GM12878 (cell line): ENCODE measurements at regions of chr3 and their contacts with region 1.

Region 1: DNA sequence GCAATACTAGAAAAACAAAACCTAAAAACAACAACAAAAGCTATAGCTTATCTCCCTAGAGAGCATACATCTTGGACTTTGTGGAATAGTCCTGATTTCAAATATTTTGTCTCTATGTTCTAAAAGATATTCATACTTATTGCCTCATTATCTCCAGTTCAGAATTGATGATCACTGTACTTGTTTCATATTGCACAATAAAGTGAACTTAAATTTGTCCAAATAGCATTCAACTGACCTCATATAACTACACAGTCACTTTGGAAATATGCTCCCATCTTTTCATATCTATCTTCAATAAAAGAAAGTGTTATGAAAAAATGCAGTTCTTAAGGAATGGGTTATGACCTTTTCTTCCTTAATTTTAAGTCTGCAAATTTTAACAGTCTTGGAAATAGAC is 228.6 kb upstream of the CMC1 start:
- DNase-seq: no peak
- ATAC-seq: no peak
- H3K4me3 ChIP-seq: no peak overlapping the region
- H3K27ac ChIP-seq: no peak overlapping the region
- H3K4me1 ChIP-seq: no peaks in the 10 kb centered on the region
- H3K27me3 ChIP-seq: no peaks in the 10 kb centered on the region
- CTCF ChIP-seq: no peak
- EP300 ChIP-seq: no peak
- POLR2A ChIP-seq: no peak
- RAD21 ChIP-seq: no peak

Region 2: GRCh38 chr3:27449530-27450150 is 563.2 kb before region 1 on chr3:
- CTCF ChIA-PET with region 1: no interaction called
- POLR2A ChIA-PET with region 1: no interaction called
- RAD21 ChIA-PET with region 1: no interaction called
- SMC1A ChIA-PET with region 1: no interaction called
- in situ Hi-C with region 1: no loop called
- intact Hi-C with region 1: no loop called
- DNase-seq: no peak
- ATAC-seq: no peak
- H3K4me3 ChIP-seq: no peak overlapping the region
- H3K27ac ChIP-seq: no peak overlapping the region
- H3K4me1 ChIP-seq: peaks cover 6% of the 10 kb centered on the region; the same call in 1 of the 2 replicates
- H3K27me3 ChIP-seq: no peaks in the 10 kb centered on the region
- CTCF ChIP-seq: no peak
- EP300 ChIP-seq: no peak
- POLR2A ChIP-seq: no peak
- RAD21 ChIP-seq: no peak

Region 3: GRCh38 chr3:27721717-27722542 is 290.9 kb before region 1 on chr3 and contains the start of gene EOMES:
- CTCF ChIA-PET with region 1: interaction called, 14 read pairs
- POLR2A ChIA-PET with region 1: interaction called, 13 read pairs
- RAD21 ChIA-PET with region 1: interaction called, 141 read pairs
- SMC1A ChIA-PET with region 1: interaction called, 129 read pairs
- in situ Hi-C with region 1: no loop called
- intact Hi-C with region 1: loop called (anchors 2 kb)
- DNase-seq: no peak
- ATAC-seq: peak; percentile 65
- H3K4me3 ChIP-seq: peak within 1 kb of the TSS; percentile 44; the same call in 1 of the 2 replicates
- H3K27ac ChIP-seq: no peak within 1 kb of the TSS
- H3K4me1 ChIP-seq: no peaks in the 10 kb centered on the region
- H3K27me3 ChIP-seq: peaks cover 2 to 14% of the 10 kb centered on the region in 2 experiments
- CTCF ChIP-seq: peak; percentile 10 to 61 (median 52); a peak in 5 of 6 replicates
- EP300 ChIP-seq: no peak
- POLR2A ChIP-seq: no peak
- RAD21 ChIP-seq: no peak
- polyA plus RNA-seq, gene EOMES: 1.5 to 2.8 TPM

Region 4: DNA sequence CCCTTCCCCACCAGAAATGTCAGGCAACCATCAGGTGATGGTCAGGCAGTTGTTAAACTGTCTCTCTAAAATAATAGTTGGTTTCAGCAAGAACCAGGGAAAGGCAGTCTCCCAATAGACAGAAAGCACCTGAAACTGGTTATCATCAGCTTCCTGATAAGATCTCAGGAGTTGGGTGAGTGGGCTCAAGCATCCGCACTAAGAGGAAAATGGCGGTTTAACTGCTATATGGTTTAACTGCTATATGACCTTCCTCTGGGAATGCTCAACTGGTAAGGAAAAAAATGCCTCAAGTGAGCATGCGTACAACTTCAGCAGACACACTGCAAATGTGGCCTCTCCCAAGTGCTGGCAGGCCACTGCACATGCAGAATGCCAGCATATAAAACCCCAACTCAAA is 12.2 kb before region 1 on chr3:
- CTCF ChIA-PET with region 1: interaction called, 3 read pairs
- POLR2A ChIA-PET with region 1: interaction called, 8 read pairs
- RAD21 ChIA-PET with region 1: interaction called, 4 read pairs
- SMC1A ChIA-PET with region 1: interaction called, 12 read pairs
- in situ Hi-C with region 1: no loop called
- intact Hi-C with region 1: no loop called
- DNase-seq: no peak
- ATAC-seq: 0 out of 3 replicates have a peak, but pooled peaks have one; percentile 18
- H3K4me3 ChIP-seq: no peak overlapping the region
- H3K27ac ChIP-seq: no peak overlapping the region
- H3K4me1 ChIP-seq: no peaks in the 10 kb centered on the region
- H3K27me3 ChIP-seq: no peaks in the 10 kb centered on the region
- CTCF ChIP-seq: no peak
- EP300 ChIP-seq: no peak
- POLR2A ChIP-seq: no peak
- RAD21 ChIP-seq: no peak

Region 5: GRCh38 chr3:28057539-28057938 is 44.7 kb after region 1 on chr3:
- CTCF ChIA-PET with region 1: interaction called, 7 read pairs
- POLR2A ChIA-PET with region 1: interaction called, 5 read pairs
- RAD21 ChIA-PET with region 1: interaction called, 11 read pairs
- SMC1A ChIA-PET with region 1: interaction called, 11 read pairs
- in situ Hi-C with region 1: no loop called
- intact Hi-C with region 1: no loop called
- DNase-seq: no peak
- ATAC-seq: peak; percentile 41; the same call in 2 of the 3 replicates
- H3K4me3 ChIP-seq: no peak overlapping the region
- H3K27ac ChIP-seq: no peak overlapping the region
- H3K4me1 ChIP-seq: no peaks in the 10 kb centered on the region
- H3K27me3 ChIP-seq: no peaks in the 10 kb centered on the region
- CTCF ChIP-seq: no peak
- EP300 ChIP-seq: no peak
- POLR2A ChIP-seq: no peak
- RAD21 ChIP-seq: 0 out of 2 replicates have a peak, but pooled peaks have one; percentile 13

Region 6: GRCh38 chr3:28134792-28135375 is 122.1 kb after region 1 on chr3:
- CTCF ChIA-PET with region 1: interaction called, 4 read pairs
- POLR2A ChIA-PET with region 1: interaction called, 9 read pairs
- RAD21 ChIA-PET with region 1: interaction called, 248 read pairs
- SMC1A ChIA-PET with region 1: interaction called, 35 read pairs
- in situ Hi-C with region 1: no loop called
- intact Hi-C with region 1: no loop called
- DNase-seq: no peak
- ATAC-seq: peak; percentile 16
- H3K4me3 ChIP-seq: no peak overlapping the region
- H3K27ac ChIP-seq: no peak overlapping the region
- H3K4me1 ChIP-seq: no peaks in the 10 kb centered on the region
- H3K27me3 ChIP-seq: no peaks in the 10 kb centered on the region
- CTCF ChIP-seq: no peak
- EP300 ChIP-seq: no peak
- POLR2A ChIP-seq: no peak
- RAD21 ChIP-seq: no peak

Region 7: DNA sequence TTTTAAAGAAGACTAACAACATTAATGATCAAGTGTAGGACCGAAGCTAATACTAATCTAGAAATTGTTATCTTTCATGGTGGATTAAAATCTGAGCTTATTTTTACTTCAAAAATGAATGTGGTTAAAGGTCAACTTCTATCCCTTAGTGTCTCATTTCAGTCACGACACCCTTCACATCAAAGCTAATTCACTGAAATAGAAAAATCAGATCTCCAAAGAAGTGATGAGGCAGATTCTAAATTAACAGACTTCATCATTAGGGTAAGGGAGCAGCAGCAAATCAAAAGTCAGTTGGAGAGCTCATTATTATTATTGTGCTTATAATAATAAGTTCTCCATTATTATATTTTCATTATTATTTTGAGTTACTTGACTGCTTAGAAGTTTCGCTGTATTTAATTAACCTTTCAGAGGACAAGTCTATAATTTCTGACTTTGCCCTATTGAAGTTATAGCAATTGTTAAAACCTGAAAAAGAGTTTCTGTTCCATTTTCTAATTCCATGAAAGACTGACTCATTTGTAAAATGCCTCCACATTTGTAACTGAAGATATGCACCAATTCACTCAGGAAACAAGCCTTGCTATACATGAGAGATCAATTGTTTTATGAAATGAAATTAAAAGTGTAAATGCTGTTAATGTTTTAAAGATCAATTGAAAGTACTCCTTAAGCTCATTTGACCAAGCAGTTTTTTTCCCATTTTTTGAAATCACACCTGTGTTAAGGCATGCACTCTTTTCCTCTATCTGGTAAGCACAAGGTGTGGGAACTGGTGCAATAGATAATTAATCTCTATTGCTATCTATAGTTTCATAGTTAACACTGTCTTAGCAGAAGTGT is 205.5 kb after region 1 on chr3:
- CTCF ChIA-PET with region 1: no interaction called
- POLR2A ChIA-PET with region 1: interaction called, 3 read pairs
- RAD21 ChIA-PET with region 1: interaction called, 21 read pairs
- SMC1A ChIA-PET with region 1: interaction called, 9 read pairs
- in situ Hi-C with region 1: no loop called
- intact Hi-C with region 1: no loop called
- DNase-seq: peak; percentile 28
- ATAC-seq: peak; percentile 91
- H3K4me3 ChIP-seq: no peak overlapping the region
- H3K27ac ChIP-seq: no peak overlapping the region
- H3K4me1 ChIP-seq: no peaks in the 10 kb centered on the region
- H3K27me3 ChIP-seq: no peaks in the 10 kb centered on the region
- CTCF ChIP-seq: no peak
- EP300 ChIP-seq: peak; percentile 78 to 88; a peak in 3 of 4 replicates
- POLR2A ChIP-seq: no peak
- RAD21 ChIP-seq: no peak